ENCODE measurements at regions of chr9 and their contacts with region 1.

Region 1: DNA sequence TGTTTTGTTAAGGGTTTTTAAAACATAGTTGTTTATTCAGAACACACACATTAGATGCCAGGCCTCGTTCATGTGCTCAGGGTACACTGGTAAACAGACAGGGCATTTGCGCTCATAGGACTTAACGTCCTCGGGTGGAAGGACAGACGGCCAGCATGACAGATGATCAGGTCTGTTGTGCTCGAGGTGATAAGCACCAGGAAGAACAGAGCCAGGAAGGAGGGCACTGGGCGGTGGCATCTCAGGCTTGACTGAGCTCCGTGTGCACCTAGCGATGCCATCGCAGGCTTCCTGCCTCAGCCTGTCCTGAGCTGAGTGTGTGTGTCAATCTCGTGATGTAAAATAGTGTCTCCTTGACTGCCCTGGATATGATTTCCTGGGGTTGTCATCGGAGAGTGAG is 96.5 kb downstream of the EHMT1 start:
- DNase-seq: no peak
- H3K4me3 ChIP-seq: no peak overlapping the region
- H3K27ac ChIP-seq: no peak overlapping the region
- H3K4me1 ChIP-seq: no peaks in the 10 kb centered on the region
- H3K27me3 ChIP-seq: no peaks in the 10 kb centered on the region
- CTCF ChIP-seq: no peak

Region 2: GRCh38 chr9:137605121-137606004 is 110.0 kb before region 1 on chr9 and contains the start of gene ARRDC1:
- CTCF ChIA-PET with region 1: no interaction called
- POLR2A ChIA-PET with region 1: no interaction called
- intact Hi-C with region 1: no loop called
- DNase-seq: peak; percentile 98
- H3K4me3 ChIP-seq: peak within 1 kb of the TSS; percentile 78
- H3K27ac ChIP-seq: peak within 1 kb of the TSS; percentile 80
- H3K4me1 ChIP-seq: peaks cover 27% of the 10 kb centered on the region
- H3K27me3 ChIP-seq: no peaks in the 10 kb centered on the region
- CTCF ChIP-seq: no peak
- total RNA-seq, gene ARRDC1: 13.3 and 18.3 TPM in 2 replicates

Region 3: GRCh38 chr9:137694967-137695879 is 20.1 kb before region 1 on chr9:
- CTCF ChIA-PET with region 1: interaction called, 10 read pairs
- POLR2A ChIA-PET with region 1: interaction called, 7 read pairs
- intact Hi-C with region 1: no loop called
- DNase-seq: peak; percentile 23
- H3K4me3 ChIP-seq: no peak overlapping the region
- H3K27ac ChIP-seq: no peak overlapping the region
- H3K4me1 ChIP-seq: peaks cover 18% of the 10 kb centered on the region
- H3K27me3 ChIP-seq: no peaks in the 10 kb centered on the region
- CTCF ChIP-seq: peak; percentile 46